Dorsolateral prefrontal cortex (tissue), 120 donors: ENCODE measurements at regions of chr22 and their contacts with region 1.

Region 1: DNA sequence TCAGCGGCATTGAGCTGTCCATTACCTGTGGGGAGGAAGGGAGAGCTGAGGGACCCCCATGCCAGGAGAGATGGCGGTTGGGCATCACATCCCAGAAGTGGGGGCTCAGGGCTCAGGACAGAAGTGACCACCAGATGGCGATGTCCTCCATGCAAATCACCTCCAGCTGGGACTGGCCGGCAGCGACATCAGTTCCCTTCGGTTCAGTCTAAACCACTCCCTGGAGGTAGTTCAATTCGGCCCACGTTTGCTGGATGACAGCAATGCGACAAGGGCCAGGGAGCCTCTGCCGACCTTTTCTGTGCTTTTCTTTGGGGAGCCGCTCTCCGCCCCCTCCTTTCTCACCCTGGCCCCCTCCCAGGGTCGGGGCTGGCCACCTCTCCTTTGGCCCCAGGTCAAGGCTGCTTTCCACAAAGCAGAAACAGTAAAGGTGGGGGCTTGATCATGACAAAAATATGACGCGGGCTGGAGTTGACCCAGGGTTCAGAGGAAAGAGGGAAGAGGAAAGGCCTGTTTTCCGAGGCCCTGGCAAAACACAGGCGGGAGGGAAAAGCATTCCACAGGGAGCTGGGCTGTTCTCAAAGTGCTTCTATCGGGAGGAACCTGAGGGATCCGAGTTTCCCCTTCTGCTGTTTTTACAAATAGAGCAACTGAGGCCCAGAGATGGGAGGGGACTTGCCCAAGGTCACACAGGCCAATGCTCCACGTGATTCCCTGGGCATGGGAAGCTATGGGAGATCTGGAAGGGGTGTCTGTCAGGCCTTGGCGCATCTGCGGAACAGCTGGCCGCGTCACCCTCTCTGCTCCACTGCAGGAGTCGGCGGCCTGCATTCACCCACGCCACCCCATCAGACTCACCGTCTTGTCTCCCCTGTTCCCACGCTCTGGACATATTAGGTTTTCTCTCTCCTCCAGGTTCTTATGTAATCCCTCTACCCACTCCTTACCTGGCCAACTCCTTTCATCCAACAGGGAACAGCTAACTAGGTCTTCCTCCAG is 54.7 kb downstream of the FBXO7 start:
- DNase-seq: peak; percentile 70 to 93 (median 88)
- H3K4me3 ChIP-seq: peak overlapping the region in 57 of 59 donors; percentile 4 to 65 (median 40)
- H3K27ac ChIP-seq: peak overlapping the region; percentile 42 to 98 (median 90)
- H3K27me3 ChIP-seq: no peaks in the 10 kb centered on the region
- CTCF ChIP-seq: peak; percentile 86 to 98 (median 95)

Region 2: GRCh38 chr22:32411829-32412592 is 117.3 kb before region 1 on chr22 and contains the start of gene RTCB:
- intact Hi-C with region 1: loop called in 1 of 2 experiments (anchors 5 kb)
- DNase-seq: peak; percentile 81 to 94 (median 88)
- H3K4me3 ChIP-seq: peak within 1 kb of the TSS; percentile 63 to 100 (median 92)
- H3K27ac ChIP-seq: peak within 1 kb of the TSS in 51 of 59 donors; percentile 16 to 86 (median 56)
- H3K27me3 ChIP-seq: no peaks in the 10 kb centered on the region
- CTCF ChIP-seq: peak in 48 of 56 donors; percentile 8 to 66 (median 36)
- total RNA-seq, gene RTCB: 34.6 to 76.6 (median 58.4) TPM

Region 3: DNA sequence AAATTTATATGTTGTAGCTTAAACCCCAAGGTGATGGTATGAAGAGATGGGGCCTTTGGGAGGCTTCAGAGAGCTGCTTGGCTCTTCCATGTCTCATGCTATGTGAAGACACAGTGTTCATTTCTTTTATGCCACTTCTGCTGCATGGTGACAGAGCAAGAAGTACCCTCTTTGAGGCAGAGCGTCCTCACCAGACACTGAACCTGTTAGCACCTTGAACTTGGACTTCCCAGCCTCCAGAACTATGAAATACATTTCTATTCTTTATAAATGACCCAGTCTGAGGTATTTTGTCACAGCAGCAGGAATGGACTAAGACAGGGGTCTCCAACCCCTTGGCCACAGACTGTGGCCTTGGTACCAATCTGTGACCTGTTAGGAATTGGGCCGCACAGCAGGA is 125.8 kb after region 1 on chr22:
- intact Hi-C with region 1: loop called in 1 of 2 experiments (anchors 5 kb)
- DNase-seq: no peak
- H3K4me3 ChIP-seq: no peak overlapping the region
- H3K27ac ChIP-seq: no peak overlapping the region
- H3K27me3 ChIP-seq: no peaks in the 10 kb centered on the region
- CTCF ChIP-seq: no peak

Region 4: DNA sequence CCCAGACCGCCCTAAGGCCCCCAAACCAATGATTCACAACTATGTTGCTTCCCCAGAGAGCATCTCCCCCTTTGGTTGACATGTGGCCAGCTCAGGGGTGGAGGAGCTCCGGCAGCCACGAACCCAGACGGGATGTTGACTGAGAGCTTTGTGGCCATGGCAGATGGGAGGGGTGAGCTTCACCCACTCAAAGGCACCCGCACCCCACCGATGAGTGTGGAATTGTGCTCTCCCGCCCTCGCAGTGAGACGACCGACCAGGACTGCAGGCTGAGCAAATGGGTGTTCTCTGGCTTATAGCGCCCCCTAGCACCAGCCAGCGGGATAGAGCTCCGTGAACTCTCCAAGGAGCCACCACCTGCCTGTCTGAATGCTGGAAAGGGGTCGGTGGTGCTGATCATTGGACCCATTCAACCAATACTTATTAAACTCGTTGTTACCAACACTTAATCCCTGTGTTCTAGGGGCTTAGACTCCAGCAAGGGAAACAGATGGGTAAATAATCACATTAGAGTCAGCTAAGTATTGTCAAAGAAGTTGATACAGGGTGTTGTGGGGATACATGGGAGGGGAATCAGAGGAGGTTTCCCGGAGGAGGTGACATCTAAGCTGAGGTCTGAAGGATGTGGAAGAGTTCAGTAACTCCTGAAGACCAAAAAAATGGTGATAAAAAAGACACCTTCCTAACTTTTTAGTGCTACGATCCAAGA is 267.7 kb after region 1 on chr22:
- intact Hi-C with region 1: loop called (anchors 1 to 2 kb)
- DNase-seq: peak; percentile 19 to 83 (median 77)
- H3K4me3 ChIP-seq: peak overlapping the region in 8 of 59 donors; percentile 2 to 46 (median 21)
- H3K27ac ChIP-seq: peak overlapping the region in 30 of 59 donors; percentile 9 to 90 (median 60)
- H3K27me3 ChIP-seq: peaks cover 0 to 4% (median 0%) of the 10 kb centered on the region in 45 donors
- CTCF ChIP-seq: peak; percentile 52 to 96 (median 87)

Region 5: GRCh38 chr22:32823024-32823730 is 293.9 kb after region 1 on chr22:
- intact Hi-C with region 1: loop called in 1 of 2 experiments (anchors 10 kb)
- DNase-seq: no peak
- H3K4me3 ChIP-seq: no peak overlapping the region
- H3K27ac ChIP-seq: no peak overlapping the region
- H3K27me3 ChIP-seq: no peaks in the 10 kb centered on the region
- CTCF ChIP-seq: peak in 23 of 56 donors; percentile 8 to 36 (median 20)

Region 6: DNA sequence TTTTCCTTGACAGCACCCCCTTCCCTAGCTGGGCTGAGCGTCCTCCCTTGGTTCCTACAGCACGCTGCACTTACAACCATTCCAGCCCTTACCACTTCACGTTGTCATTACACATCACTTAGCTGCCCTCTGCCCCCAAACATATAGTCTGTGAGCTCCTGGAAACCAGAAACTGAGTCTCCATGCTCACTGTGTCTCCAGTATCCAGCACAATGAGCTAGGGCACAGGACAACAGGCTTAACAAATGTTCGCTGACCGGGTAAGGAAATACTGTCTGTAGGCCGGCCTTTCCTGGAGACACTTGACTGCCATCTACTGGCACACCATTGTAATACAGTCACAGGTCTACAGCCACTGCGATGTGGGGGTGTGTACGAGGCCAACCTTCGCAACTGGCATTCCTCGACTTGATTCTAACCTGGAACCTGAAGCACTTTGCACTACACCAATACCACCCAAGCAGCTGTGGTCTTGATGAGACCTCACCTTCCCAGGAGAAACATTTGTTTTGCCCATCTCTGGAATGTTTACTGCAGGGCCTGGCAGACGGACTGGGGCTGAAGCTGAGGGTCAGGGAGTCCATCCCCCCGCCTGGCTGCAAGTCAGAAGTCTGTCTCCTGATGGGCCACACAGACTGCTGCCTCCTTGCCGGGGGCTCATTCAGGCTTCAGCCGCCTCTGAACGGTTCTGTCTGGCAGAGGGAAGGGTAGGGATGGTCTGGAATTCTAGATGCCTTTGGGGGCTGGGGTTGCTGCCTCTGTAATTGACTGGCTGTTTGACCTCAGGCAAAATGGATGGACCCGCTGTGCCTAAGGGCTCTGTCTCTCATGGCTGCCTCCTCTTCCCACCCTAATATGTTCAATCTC is 456.8 kb after region 1 on chr22:
- intact Hi-C with region 1: loop called (anchors 1 to 5 kb)
- DNase-seq: peak in 9 of 10 donors; percentile 40 to 82 (median 64)
- H3K4me3 ChIP-seq: no peak overlapping the region
- H3K27ac ChIP-seq: peak overlapping the region in 35 of 59 donors; percentile 3 to 77 (median 51)
- H3K27me3 ChIP-seq: no peaks in the 10 kb centered on the region
- CTCF ChIP-seq: peak; percentile 62 to 96 (median 87)

Region 7: GRCh38 chr22:33000342-33001280 is 471.3 kb after region 1 on chr22:
- intact Hi-C with region 1: loop called (anchors 2 to 5 kb)
- DNase-seq: peak in 7 of 10 donors; percentile 16 to 73 (median 50)
- H3K4me3 ChIP-seq: no peak overlapping the region
- H3K27ac ChIP-seq: no peak overlapping the region
- H3K27me3 ChIP-seq: no peaks in the 10 kb centered on the region
- CTCF ChIP-seq: peak; percentile 64 to 93 (median 83)